CD4-positive, alpha-beta T cell (primary cell): ENCODE measurements at regions of chr1 and their contacts with region 1.

Region 1: DNA sequence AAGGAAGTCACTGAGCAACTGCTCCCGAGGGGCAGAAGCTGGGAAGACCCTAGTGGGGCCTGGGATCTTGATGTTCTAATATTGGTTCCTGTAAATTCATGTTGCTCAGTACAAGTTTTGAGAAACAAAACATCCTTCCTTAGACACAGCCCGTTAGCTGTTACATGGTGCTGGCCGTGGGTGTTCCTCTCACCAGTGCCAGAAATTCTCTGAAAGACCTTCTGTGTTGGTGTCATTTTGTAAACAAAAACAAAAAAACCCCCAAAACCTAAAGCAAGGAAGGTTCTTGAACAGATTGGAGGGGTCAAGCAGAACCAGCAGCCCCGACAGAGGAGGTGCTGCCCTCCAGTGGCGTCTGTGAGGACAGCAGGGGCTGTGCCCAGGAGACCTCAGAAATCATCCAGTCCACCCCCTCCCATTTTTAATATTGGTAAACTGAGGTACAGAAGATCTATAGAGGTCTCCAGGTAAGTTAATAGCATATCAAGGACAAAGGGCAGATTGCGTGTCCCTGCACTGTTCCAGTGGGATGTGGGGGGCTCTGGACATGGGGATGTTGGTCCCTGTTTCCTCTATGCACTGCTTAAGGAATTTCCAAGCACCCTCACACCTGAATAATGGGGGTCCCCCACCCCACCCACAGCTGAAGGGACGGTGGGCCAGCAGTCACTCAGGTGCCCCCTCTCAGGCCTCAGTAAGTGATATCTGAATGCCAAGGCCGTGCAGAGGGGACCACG is 38.2 kb downstream of the SLC2A7 start:
- DNase-seq: peak; percentile 31 to 77 (median 62)
- ATAC-seq: peak; percentile 80
- H3K4me3 ChIP-seq: peak overlapping the region; percentile 0
- H3K4me3 Mint-ChIP-seq: peak overlapping the region; percentile 13
- H3K27ac ChIP-seq: no peak overlapping the region
- H3K27ac Mint-ChIP-seq: peak overlapping the region; percentile 15
- H3K4me1 ChIP-seq: peaks cover 21% of the 10 kb centered on the region
- H3K4me1 Mint-ChIP-seq: peaks cover 15% of the 10 kb centered on the region
- H3K27me3 ChIP-seq: no peaks in the 10 kb centered on the region
- H3K27me3 Mint-ChIP-seq: no peaks in the 10 kb centered on the region
- CTCF ChIP-seq: peak; percentile 97

Region 2: GRCh38 chr1:8962812-8963530 is 25.1 kb before region 1 on chr1:
- CTCF ChIA-PET with region 1: interaction called, 13 read pairs
- POLR2A ChIA-PET with region 1: no interaction called
- intact Hi-C with region 1: loop called in 1 of 2 experiments (anchors 1 kb)
- DNase-seq: peak in 11 of 14 experiments; percentile 16 to 61 (median 40)
- ATAC-seq: peak; percentile 29
- H3K4me3 ChIP-seq: no peak overlapping the region
- H3K4me3 Mint-ChIP-seq: no peak overlapping the region
- H3K27ac ChIP-seq: no peak overlapping the region
- H3K27ac Mint-ChIP-seq: no peak overlapping the region
- H3K4me1 ChIP-seq: peaks cover 45% of the 10 kb centered on the region
- H3K4me1 Mint-ChIP-seq: peaks cover 36% of the 10 kb centered on the region
- H3K27me3 ChIP-seq: no peaks in the 10 kb centered on the region
- H3K27me3 Mint-ChIP-seq: no peaks in the 10 kb centered on the region
- CTCF ChIP-seq: no peak